Uterus (tissue), 4 donors: ENCODE measurements at regions of chr18 and their contacts with region 1.

Region 1: GRCh38 chr18:76709659-76710645 is 112.4 kb upstream of the ZNF236 start:
- DNase-seq: peak; percentile 72 to 85
- H3K4me3 ChIP-seq: no peak overlapping the region
- H3K27ac ChIP-seq: peak overlapping the region; percentile 87 to 92
- H3K4me1 ChIP-seq: no peaks in the 10 kb centered on the region
- H3K27me3 ChIP-seq: no peaks in the 10 kb centered on the region
- CTCF ChIP-seq: peak; percentile 91 to 95 (median 93)
- POLR2A ChIP-seq: no peak

Region 2: GRCh38 chr18:76398896-76399612 is 310.9 kb before region 1 on chr18:
- intact Hi-C with region 1: loop called (anchors 5 kb)
- DNase-seq: peak; percentile 92
- H3K4me3 ChIP-seq: no peak overlapping the region
- H3K27ac ChIP-seq: peak overlapping the region; percentile 80 to 85
- H3K4me1 ChIP-seq: peaks cover 0 to 10% of the 10 kb centered on the region in 2 donors
- H3K27me3 ChIP-seq: no peaks in the 10 kb centered on the region
- CTCF ChIP-seq: peak; percentile 91 to 96 (median 94)
- POLR2A ChIP-seq: no peak

Region 3: GRCh38 chr18:76847916-76848315 is 138.0 kb after region 1 on chr18:
- intact Hi-C with region 1: no loop called
- DNase-seq: no peak
- H3K4me3 ChIP-seq: no peak overlapping the region
- H3K27ac ChIP-seq: no peak overlapping the region
- H3K4me1 ChIP-seq: no peaks in the 10 kb centered on the region
- H3K27me3 ChIP-seq: no peaks in the 10 kb centered on the region
- CTCF ChIP-seq: no peak
- POLR2A ChIP-seq: no peak